ENCODE measurements at regions of chr10 and their contacts with region 1.

Region 1: DNA sequence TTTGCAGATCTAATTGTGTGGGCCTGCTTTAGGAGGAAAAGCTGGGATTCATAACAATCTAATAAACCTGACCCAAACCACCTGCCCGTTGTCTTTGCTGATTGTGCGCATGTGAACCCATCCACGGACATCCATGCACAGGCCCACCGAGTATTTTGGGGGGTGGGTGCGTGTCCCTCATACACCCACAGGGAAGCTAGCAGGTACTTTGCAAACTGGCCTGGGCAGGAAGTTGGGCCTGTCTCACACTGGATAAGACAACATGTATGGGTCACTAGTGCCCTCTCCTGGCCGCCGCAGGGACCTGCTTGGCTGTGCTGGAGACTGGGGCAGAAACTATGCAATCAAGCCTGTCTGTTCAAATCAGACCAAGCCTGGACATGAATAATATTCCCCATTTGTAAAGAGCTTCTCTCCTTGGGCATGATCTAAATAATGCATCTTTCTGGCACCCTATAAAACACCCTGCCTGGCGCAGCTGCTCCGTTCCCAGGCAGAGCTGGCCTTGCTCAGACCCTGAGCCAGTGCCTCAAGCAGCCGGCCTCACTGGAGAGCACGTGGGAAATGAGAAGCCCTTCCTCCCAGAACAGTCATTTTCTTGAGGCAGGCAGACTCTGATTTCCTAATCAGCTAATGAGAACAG is 15.8 kb downstream of the ECHDC3 start:
- DNase-seq: peak; percentile 83
- ATAC-seq: peak; percentile 96
- H3K4me3 ChIP-seq: peak overlapping the region; percentile 43 to 68 (median 45); a peak in 5 of 6 replicates
- H3K27ac ChIP-seq: peak overlapping the region; percentile 74
- H3K4me1 ChIP-seq: peaks cover 55% of the 10 kb centered on the region
- H3K27me3 ChIP-seq: peaks cover 0 to 28% of the 10 kb centered on the region in 2 experiments; a peak in 3 of 5 replicates
- CTCF ChIP-seq: peak; percentile 97
- EP300 ChIP-seq: no peak
- POLR2A ChIP-seq: no peak
- RAD21 ChIP-seq: peak; percentile 94

Region 2: GRCh38 chr10:11424456-11425297 is 333.3 kb before region 1 on chr10:
- CTCF ChIA-PET with region 1: interaction called, 7 read pairs
- POLR2A ChIA-PET with region 1: no interaction called
- in situ Hi-C with region 1: no loop called
- intact Hi-C with region 1: loop called (anchors 5 kb)
- DNase-seq: peak; percentile 39
- ATAC-seq: peak; percentile 97
- H3K4me3 ChIP-seq: no peak overlapping the region
- H3K27ac ChIP-seq: no peak overlapping the region
- H3K4me1 ChIP-seq: no peaks in the 10 kb centered on the region
- H3K27me3 ChIP-seq: peaks cover 0 to 4% of the 10 kb centered on the region in 2 experiments; a peak in 2 of 5 replicates
- CTCF ChIP-seq: peak; percentile 77
- EP300 ChIP-seq: no peak
- POLR2A ChIP-seq: no peak
- RAD21 ChIP-seq: no peak

Region 3: DNA sequence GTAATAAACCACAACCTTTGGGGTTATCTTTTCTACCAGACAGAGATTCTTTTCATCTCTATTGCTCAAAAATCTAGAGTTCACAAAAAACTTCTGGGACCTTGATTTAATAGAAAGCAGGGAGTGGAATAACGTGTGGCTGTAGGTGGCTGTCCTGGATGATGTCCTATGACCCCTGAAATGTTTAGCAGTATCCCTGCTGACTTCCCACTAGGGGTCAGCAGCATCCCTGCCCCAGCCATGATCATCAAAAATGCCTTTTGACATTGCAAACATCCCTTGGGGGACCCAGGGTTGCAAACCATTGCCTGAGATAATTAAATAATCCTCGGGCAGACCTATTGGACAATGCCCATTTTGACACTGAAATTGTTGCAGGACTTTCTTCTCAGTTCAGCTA is 323.6 kb before region 1 on chr10:
- CTCF ChIA-PET with region 1: no interaction called
- POLR2A ChIA-PET with region 1: no interaction called
- in situ Hi-C with region 1: loop called (anchors 10 kb)
- intact Hi-C with region 1: loop called (anchors 1 kb)
- DNase-seq: peak; percentile 16
- ATAC-seq: peak; percentile 77
- H3K4me3 ChIP-seq: no peak overlapping the region
- H3K27ac ChIP-seq: no peak overlapping the region
- H3K4me1 ChIP-seq: no peaks in the 10 kb centered on the region
- H3K27me3 ChIP-seq: peaks cover 4 to 40% of the 10 kb centered on the region in 2 experiments; a peak in 3 of 5 replicates
- CTCF ChIP-seq: peak; percentile 64
- EP300 ChIP-seq: no peak
- POLR2A ChIP-seq: no peak
- RAD21 ChIP-seq: peak; percentile 12; the same call in 1 of the 2 replicates

Region 4: DNA sequence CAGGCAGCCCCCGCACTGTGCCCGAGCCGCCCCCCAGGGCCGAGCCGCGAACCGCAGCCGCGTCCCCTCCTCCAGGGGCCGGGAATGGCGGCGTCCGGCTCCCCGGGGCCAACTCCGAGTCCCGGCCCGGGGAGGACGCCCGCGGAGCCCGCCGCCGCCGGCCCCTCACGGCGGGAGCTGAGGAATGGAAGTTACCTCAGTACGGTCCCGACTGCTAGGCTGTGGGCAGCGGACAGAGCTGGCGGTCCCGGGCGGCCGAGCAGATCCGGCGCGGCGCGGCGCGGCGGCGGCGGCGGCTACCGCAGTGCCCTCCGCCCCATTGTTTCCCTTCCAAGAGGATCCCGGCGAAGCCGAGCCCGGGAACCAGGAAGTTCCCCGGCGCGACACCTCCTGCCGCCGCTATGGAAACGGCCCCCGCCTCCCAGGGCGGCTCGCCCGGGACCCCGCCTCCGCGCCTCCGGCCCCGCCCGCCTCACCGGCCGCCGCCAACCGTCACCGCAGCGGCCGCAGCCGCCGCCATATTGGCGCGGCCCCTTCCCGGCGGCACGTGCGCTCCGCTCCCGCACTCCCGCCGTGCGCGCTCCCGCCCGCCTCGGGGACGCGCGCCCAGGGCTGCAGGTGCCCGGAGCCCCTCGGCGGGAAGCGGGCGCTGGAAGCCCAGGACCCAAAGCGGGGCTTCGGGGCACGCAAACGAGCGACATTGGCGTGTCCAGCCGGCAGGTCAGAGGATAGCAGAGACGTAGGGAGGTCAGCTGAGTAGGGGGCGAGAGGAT is 146.5 kb before region 1 on chr10 and contains the start of gene USP6NL:
- CTCF ChIA-PET with region 1: no interaction called
- POLR2A ChIA-PET with region 1: no interaction called
- in situ Hi-C with region 1: no loop called
- intact Hi-C with region 1: loop called (anchors 5 kb)
- DNase-seq: peak; percentile 70
- ATAC-seq: peak; percentile 88
- H3K4me3 ChIP-seq: peak within 1 kb of the TSS; percentile 90 to 96 (median 92)
- H3K27ac ChIP-seq: peak within 1 kb of the TSS; percentile 82
- H3K4me1 ChIP-seq: peaks cover 67% of the 10 kb centered on the region
- H3K27me3 ChIP-seq: no peaks in the 10 kb centered on the region; a peak in 1 of 5 replicates
- CTCF ChIP-seq: no peak
- EP300 ChIP-seq: no peak
- POLR2A ChIP-seq: peak; percentile 43 to 69
- RAD21 ChIP-seq: no peak; the same call in 1 of the 2 replicates
- total RNA-seq, gene USP6NL: 22.9 and 26.2 TPM in 2 replicates

Region 5: GRCh38 chr10:11698691-11699549 is 59.0 kb before region 1 on chr10:
- CTCF ChIA-PET with region 1: no interaction called
- POLR2A ChIA-PET with region 1: no interaction called
- in situ Hi-C with region 1: no loop called
- intact Hi-C with region 1: loop called (anchors 2 kb)
- DNase-seq: peak; percentile 61
- ATAC-seq: peak; percentile 60
- H3K4me3 ChIP-seq: peak overlapping the region; percentile 2 to 34 (median 33); a peak in 4 of 6 replicates
- H3K27ac ChIP-seq: peak overlapping the region; percentile 83
- H3K4me1 ChIP-seq: peaks cover 72% of the 10 kb centered on the region
- H3K27me3 ChIP-seq: no peaks in the 10 kb centered on the region
- CTCF ChIP-seq: no peak
- EP300 ChIP-seq: peak in 1 of 2 experiments; percentile 68; a peak in 2 of 4 replicates
- POLR2A ChIP-seq: no peak
- RAD21 ChIP-seq: no peak

Region 6: DNA sequence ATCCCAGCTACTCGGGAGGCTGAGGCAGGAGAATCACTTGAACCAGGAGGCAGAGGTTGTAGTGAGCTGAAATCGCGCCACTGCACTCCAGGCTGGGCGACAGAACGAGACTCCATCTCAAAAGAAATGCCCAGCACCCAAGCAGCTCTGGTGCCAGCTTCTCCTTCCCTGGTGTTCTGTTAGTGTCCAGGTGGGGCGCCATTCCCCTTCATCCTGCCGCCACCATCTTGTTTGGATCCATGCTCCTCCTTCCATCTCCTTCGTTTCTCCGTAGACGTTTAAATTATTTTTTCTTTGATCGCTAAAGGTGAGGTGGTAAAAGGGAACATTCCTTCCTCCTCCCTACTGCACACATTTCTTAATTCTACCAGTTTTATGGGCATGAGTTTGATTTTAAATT is 95.5 kb after region 1 on chr10:
- CTCF ChIA-PET with region 1: no interaction called
- POLR2A ChIA-PET with region 1: no interaction called
- in situ Hi-C with region 1: no loop called
- intact Hi-C with region 1: no loop called
- DNase-seq: no peak
- ATAC-seq: no peak
- H3K4me3 ChIP-seq: no peak overlapping the region
- H3K27ac ChIP-seq: no peak overlapping the region
- H3K4me1 ChIP-seq: no peaks in the 10 kb centered on the region
- H3K27me3 ChIP-seq: no peaks in the 10 kb centered on the region
- CTCF ChIP-seq: peak; percentile 35
- EP300 ChIP-seq: no peak
- POLR2A ChIP-seq: no peak
- RAD21 ChIP-seq: no peak